ENCODE measurements at regions of chr17 and their contacts with region 1.

Region 1: GRCh38 chr17:79393358-79394202 is 217.3 kb downstream of the RBFOX3 start:
- DNase-seq: peak; percentile 40
- ATAC-seq: peak; percentile 95
- H3K4me3 ChIP-seq: no peak overlapping the region
- H3K27ac ChIP-seq: no peak overlapping the region
- H3K4me1 ChIP-seq: no peaks in the 10 kb centered on the region
- H3K27me3 ChIP-seq: peaks cover 18% of the 10 kb centered on the region; the same call in 1 of the 2 replicates
- CTCF ChIP-seq: peak; percentile 88
- POLR2A ChIP-seq: no peak
- RAD21 ChIP-seq: peak; percentile 85

Region 2: GRCh38 chr17:79009397-79010308 is 383.9 kb before region 1 on chr17 and contains the start of gene CANT1:
- CTCF ChIA-PET with region 1: no interaction called
- POLR2A ChIA-PET with region 1: no interaction called
- dilution Hi-C with region 1: no loop called
- in situ Hi-C with region 1: loop called (anchors 10 kb)
- intact Hi-C with region 1: no loop called
- DNase-seq: peak; percentile 77
- ATAC-seq: peak; percentile 98
- H3K4me3 ChIP-seq: peak within 1 kb of the TSS; percentile 84
- H3K27ac ChIP-seq: peak within 1 kb of the TSS; percentile 94
- H3K4me1 ChIP-seq: peaks cover 16% of the 10 kb centered on the region
- H3K27me3 ChIP-seq: no peaks in the 10 kb centered on the region
- CTCF ChIP-seq: no peak
- POLR2A ChIP-seq: peak; percentile 80
- RAD21 ChIP-seq: no peak
- total RNA-seq, gene CANT1: 50.0 and 51.8 TPM in 2 replicates

Region 3: GRCh38 chr17:79045842-79046196 is 347.8 kb before region 1 on chr17:
- CTCF ChIA-PET with region 1: interaction called, 3 read pairs
- POLR2A ChIA-PET with region 1: no interaction called
- dilution Hi-C with region 1: no loop called
- in situ Hi-C with region 1: no loop called
- intact Hi-C with region 1: loop called (anchors 5 kb)
- DNase-seq: peak; percentile 57
- ATAC-seq: peak; percentile 98
- H3K4me3 ChIP-seq: no peak overlapping the region
- H3K27ac ChIP-seq: no peak overlapping the region
- H3K4me1 ChIP-seq: no peaks in the 10 kb centered on the region
- H3K27me3 ChIP-seq: no peaks in the 10 kb centered on the region; the same call in 1 of the 2 replicates
- CTCF ChIP-seq: peak; percentile 95
- POLR2A ChIP-seq: no peak
- RAD21 ChIP-seq: peak; percentile 86

Region 4: GRCh38 chr17:79087428-79088143 is 306.0 kb before region 1 on chr17:
- CTCF ChIA-PET with region 1: interaction called, 20 read pairs
- POLR2A ChIA-PET with region 1: no interaction called
- dilution Hi-C with region 1: no loop called
- in situ Hi-C with region 1: loop called (anchors 10 kb)
- intact Hi-C with region 1: loop called (anchors 1 kb)
- DNase-seq: peak; percentile 27
- ATAC-seq: peak; percentile 92
- H3K4me3 ChIP-seq: no peak overlapping the region
- H3K27ac ChIP-seq: no peak overlapping the region
- H3K4me1 ChIP-seq: no peaks in the 10 kb centered on the region
- H3K27me3 ChIP-seq: no peaks in the 10 kb centered on the region
- CTCF ChIP-seq: peak; percentile 81
- POLR2A ChIP-seq: no peak
- RAD21 ChIP-seq: peak; percentile 77

Region 5: GRCh38 chr17:79372470-79373238 is 20.9 kb before region 1 on chr17:
- CTCF ChIA-PET with region 1: no interaction called
- POLR2A ChIA-PET with region 1: no interaction called
- dilution Hi-C with region 1: no loop called
- in situ Hi-C with region 1: no loop called
- intact Hi-C with region 1: no loop called
- DNase-seq: no peak
- ATAC-seq: no peak
- H3K4me3 ChIP-seq: no peak overlapping the region
- H3K27ac ChIP-seq: no peak overlapping the region
- H3K4me1 ChIP-seq: no peaks in the 10 kb centered on the region
- H3K27me3 ChIP-seq: peaks cover 8% of the 10 kb centered on the region; the same call in 1 of the 2 replicates
- CTCF ChIP-seq: no peak
- POLR2A ChIP-seq: no peak
- RAD21 ChIP-seq: no peak

Region 6: DNA sequence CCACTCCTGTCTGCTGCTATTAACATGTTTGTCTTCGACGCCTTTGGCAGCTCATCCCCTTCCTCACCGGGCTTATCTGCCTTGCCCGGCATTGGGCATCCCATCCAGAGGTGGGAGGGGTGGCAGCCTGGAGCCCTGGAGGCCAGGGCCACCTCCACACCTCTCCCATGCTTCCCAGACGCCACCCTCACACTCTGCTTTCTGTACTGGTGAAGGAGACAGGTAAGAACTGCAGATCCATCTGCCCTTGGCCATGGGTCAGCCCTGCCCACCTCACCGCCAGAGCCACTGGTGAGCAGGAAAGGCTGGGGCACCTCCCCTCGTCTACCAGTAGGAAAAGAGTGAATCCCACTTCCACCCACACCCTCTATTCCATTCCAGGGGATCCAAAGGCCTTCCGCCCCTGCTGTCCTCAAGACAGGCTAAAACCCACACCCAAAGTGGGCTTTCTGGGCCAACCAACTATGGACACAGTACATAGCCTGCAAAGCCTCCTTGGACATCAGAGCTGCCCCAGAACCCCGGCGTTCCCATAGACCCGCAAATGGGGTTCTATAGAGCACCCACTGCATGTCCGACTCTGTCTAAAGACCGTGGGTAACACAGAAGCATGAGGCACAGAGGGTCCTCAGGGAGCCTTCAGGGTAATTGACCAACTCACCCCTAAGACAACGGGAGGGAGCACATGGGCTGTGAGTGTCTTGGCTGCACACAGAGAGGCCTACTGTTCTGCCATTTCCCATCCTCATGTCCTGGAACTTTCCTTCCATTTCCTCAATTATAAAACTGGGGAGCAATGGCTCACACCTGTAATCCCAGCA is 240.6 kb after region 1 on chr17:
- CTCF ChIA-PET with region 1: no interaction called
- POLR2A ChIA-PET with region 1: no interaction called
- dilution Hi-C with region 1: no loop called
- in situ Hi-C with region 1: no loop called
- intact Hi-C with region 1: no loop called
- DNase-seq: no peak
- ATAC-seq: no peak
- H3K4me3 ChIP-seq: no peak overlapping the region
- H3K27ac ChIP-seq: no peak overlapping the region
- H3K4me1 ChIP-seq: no peaks in the 10 kb centered on the region
- H3K27me3 ChIP-seq: peaks cover 5% of the 10 kb centered on the region; the same call in 1 of the 2 replicates
- CTCF ChIP-seq: no peak
- POLR2A ChIP-seq: no peak
- RAD21 ChIP-seq: no peak

Region 7: GRCh38 chr17:79707931-79708891 is 314.6 kb after region 1 on chr17:
- CTCF ChIA-PET with region 1: no interaction called
- POLR2A ChIA-PET with region 1: no interaction called
- dilution Hi-C with region 1: no loop called
- in situ Hi-C with region 1: no loop called
- intact Hi-C with region 1: loop called (anchors 2 kb)
- DNase-seq: peak; percentile 38
- ATAC-seq: peak; percentile 86
- H3K4me3 ChIP-seq: no peak overlapping the region
- H3K27ac ChIP-seq: no peak overlapping the region
- H3K4me1 ChIP-seq: no peaks in the 10 kb centered on the region
- H3K27me3 ChIP-seq: peaks cover 3% of the 10 kb centered on the region; the same call in 1 of the 2 replicates
- CTCF ChIP-seq: peak; percentile 67
- POLR2A ChIP-seq: no peak
- RAD21 ChIP-seq: peak; percentile 71

Measured in IMR-90 (cell line).